ENCODE measurements at regions of chr6 and their contacts with region 1.

Region 1: GRCh38 chr6:30453508-30454116 is 35.7 kb upstream of the HLA-E start:
- DNase-seq: peak; percentile 82
- ATAC-seq: peak; percentile 93
- H3K4me3 Mint-ChIP-seq: peak overlapping the region; percentile 29
- H3K27ac Mint-ChIP-seq: no peak overlapping the region
- H3K4me1 Mint-ChIP-seq: peaks cover 26% of the 10 kb centered on the region
- H3K27me3 Mint-ChIP-seq: peaks cover 67% of the 10 kb centered on the region
- CTCF ChIP-seq: no peak

Region 2: DNA sequence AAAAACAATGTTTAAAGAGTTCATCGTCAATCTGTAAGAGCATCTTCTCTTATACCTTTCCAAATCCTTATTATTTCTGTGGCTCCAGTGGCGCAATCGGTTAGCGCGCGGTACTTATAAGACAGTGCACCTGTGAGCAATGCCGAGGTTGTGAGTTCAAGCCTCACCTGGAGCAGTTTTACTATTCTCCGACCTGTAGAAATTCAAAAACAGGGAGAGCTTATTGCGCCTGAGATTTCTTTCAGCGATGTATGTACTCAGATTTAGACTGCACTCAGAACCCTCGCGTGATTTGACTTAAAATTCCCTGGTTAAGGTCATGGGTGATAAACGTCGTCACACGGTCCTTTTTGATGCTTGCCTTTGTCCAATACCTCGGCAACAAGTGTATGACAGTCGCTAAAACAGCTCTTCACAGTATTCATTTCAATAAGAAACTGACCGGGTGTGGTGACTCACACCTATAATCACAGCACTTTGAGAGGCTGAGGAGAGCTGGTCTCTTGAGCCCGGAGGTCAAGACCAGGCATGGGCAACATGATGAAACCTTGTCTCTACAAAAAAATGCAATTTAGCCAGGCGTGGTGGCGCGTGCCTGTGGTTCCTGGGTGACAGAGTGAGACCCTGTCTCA is 1916.0 kb before region 1 on chr6:
- CTCF ChIA-PET with region 1: no interaction called
- POLR2A ChIA-PET with region 1: no interaction called
- intact Hi-C with region 1: no loop called
- DNase-seq: no peak
- ATAC-seq: no peak
- H3K4me3 Mint-ChIP-seq: no peak overlapping the region
- H3K27ac Mint-ChIP-seq: no peak overlapping the region
- H3K4me1 Mint-ChIP-seq: peaks cover 12% of the 10 kb centered on the region
- H3K27me3 Mint-ChIP-seq: peaks cover 71% of the 10 kb centered on the region
- CTCF ChIP-seq: no peak

Region 3: DNA sequence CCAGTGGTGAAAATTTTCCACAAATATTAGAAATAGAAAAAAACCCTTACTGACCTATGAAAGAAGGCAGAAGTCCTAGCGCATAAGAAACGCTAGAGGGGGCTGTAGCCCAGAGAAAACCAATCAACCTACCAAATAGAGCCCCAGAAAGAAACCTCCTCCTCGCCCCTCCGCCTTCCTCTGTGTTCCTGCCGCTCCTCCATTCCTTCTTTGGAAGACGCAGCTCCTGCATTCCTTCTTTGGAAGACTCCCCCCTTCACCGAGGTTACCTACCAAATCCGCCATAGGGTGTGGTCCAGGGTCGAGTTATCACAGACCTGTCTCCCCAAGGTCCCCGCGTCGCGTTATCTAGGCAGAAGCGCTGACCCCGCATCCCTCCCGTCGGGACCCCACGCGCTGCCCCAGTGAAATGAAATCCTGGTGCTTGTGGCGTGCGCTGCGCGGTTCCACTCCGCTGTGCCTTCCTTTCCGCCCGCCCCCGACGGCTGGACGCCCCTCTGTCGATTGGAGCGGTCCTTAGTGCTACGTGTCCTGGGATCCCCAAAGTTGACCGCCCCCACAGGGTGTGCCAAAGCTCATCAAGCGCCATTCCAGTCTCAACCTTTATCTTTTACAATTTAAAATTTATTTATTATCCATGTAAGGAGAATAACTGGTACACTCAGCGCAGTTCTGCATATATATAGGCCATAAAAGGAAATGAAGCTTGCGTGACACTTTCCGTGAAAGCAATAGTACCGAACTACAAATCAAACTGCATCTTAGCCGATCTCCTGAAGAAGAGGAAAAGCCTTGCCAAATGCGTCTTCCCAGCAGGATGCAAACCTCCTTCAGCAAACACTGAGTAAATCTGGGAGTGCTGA is 95.7 kb before region 1 on chr6:
- CTCF ChIA-PET with region 1: no interaction called
- POLR2A ChIA-PET with region 1: no interaction called
- intact Hi-C with region 1: loop called (anchors 10 kb)
- DNase-seq: peak; percentile 33
- ATAC-seq: peak; percentile 84
- H3K4me3 Mint-ChIP-seq: peak overlapping the region; percentile 84
- H3K27ac Mint-ChIP-seq: no peak overlapping the region
- H3K4me1 Mint-ChIP-seq: peaks cover 7% of the 10 kb centered on the region
- H3K27me3 Mint-ChIP-seq: peaks cover 44% of the 10 kb centered on the region
- CTCF ChIP-seq: peak; percentile 50

Region 4: DNA sequence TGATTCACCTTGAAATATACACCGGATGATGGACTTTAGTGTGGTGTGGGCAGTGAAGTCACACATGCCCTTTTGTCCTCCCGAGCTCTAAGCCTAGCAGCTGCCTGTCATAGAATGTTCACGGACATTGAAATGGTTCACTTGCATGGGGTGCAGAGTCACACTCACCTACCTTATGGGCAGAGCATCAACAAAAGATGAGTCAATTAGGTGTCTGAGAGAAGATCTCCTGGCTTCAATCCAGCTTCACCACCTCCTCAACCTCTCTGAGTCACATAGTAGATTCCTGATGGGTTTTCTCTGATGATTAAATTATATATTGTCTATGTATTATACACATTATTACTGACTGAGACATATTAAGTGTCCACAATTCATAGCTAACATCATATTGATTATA is 12.4 kb before region 1 on chr6:
- CTCF ChIA-PET with region 1: interaction called, 3 read pairs
- POLR2A ChIA-PET with region 1: no interaction called
- intact Hi-C with region 1: loop called (anchors 2 kb)
- DNase-seq: no peak
- ATAC-seq: no peak
- H3K4me3 Mint-ChIP-seq: no peak overlapping the region
- H3K27ac Mint-ChIP-seq: no peak overlapping the region
- H3K4me1 Mint-ChIP-seq: peaks cover 2% of the 10 kb centered on the region
- H3K27me3 Mint-ChIP-seq: peaks cover 56% of the 10 kb centered on the region
- CTCF ChIP-seq: no peak

Region 5: GRCh38 chr6:30500421-30501355 is 47.1 kb after region 1 on chr6:
- CTCF ChIA-PET with region 1: no interaction called
- POLR2A ChIA-PET with region 1: no interaction called
- intact Hi-C with region 1: no loop called
- DNase-seq: no peak
- ATAC-seq: peak; percentile 61
- H3K4me3 Mint-ChIP-seq: peak overlapping the region; percentile 74
- H3K27ac Mint-ChIP-seq: peak overlapping the region; percentile 79
- H3K4me1 Mint-ChIP-seq: peaks cover 49% of the 10 kb centered on the region
- H3K27me3 Mint-ChIP-seq: no peaks in the 10 kb centered on the region
- CTCF ChIP-seq: no peak

Region 6: DNA sequence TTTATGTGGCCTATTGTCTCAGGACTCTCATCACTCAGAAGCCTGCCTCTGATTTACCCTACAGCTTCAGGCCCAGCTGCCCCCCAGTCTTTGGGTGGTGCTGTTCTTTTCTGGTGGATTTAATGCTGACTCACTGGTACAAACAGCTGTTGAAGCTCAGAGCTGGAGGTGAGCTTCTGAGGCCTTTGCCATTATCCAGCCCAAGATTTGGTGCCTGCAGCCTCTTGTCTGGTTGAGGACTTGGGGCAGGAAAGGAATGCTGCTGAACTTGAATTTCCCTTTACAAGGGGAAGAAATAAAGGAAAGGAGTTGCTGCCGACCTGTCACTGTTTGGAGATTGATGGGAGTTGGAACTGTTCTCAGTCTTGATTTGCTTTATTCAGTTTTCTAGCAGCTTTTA is 137.4 kb after region 1 on chr6:
- CTCF ChIA-PET with region 1: interaction called, 10 read pairs
- POLR2A ChIA-PET with region 1: interaction called, 7 read pairs
- intact Hi-C with region 1: no loop called
- DNase-seq: no peak
- ATAC-seq: no peak
- H3K4me3 Mint-ChIP-seq: no peak overlapping the region
- H3K27ac Mint-ChIP-seq: no peak overlapping the region
- H3K4me1 Mint-ChIP-seq: no peaks in the 10 kb centered on the region
- H3K27me3 Mint-ChIP-seq: no peaks in the 10 kb centered on the region
- CTCF ChIP-seq: no peak

Region 7: DNA sequence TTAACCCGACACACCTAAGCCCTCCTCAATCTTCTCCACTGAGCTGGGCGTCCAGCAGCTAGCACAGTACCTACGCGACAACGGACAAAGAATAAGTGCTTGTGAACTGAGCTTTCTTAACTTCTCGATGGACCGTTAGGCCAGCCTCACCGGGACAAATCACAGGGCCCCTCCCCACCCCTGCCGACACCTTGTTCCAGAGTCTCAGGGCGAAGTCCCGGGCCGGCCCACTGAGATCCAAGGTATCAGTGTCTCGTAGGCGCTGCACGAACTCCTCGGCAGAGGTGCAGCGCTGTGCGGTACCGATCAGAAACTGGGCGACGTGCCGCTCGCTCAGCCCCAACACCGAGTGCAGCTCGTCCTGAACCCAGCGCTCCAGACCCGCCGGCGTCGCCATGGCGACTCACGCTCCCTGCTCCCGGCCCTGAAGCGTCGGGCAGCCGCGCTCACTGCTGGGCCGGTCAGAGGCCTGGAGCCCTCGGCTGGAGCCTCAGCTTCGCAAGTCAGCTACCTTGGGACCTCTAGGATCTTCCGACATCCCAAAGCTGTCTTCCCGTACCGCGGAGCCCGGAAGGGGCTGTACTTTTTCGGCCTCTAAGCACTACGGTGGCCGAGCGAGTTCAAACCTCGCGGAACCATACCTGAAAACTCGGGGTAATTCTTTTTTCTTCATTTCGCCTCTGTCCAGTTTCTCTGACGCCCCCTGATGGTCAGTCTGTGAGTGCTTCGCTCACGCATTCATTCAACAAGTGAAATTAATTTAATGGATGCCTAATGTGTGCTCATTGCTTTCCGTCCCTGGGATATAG is 219.0 kb after region 1 on chr6 and contains the start of gene DHX16:
- CTCF ChIA-PET with region 1: no interaction called
- POLR2A ChIA-PET with region 1: no interaction called
- intact Hi-C with region 1: loop called (anchors 10 kb)
- DNase-seq: peak; percentile 80
- ATAC-seq: peak; percentile 88
- H3K4me3 Mint-ChIP-seq: peak within 1 kb of the TSS; percentile 91
- H3K27ac Mint-ChIP-seq: peak within 1 kb of the TSS; percentile 84
- H3K4me1 Mint-ChIP-seq: peaks cover 42% of the 10 kb centered on the region
- H3K27me3 Mint-ChIP-seq: no peaks in the 10 kb centered on the region
- CTCF ChIP-seq: peak; percentile 51
- total RNA-seq, gene DHX16: 42.3 and 50.4 TPM in 2 replicates

Region 8: GRCh38 chr6:30800871-30801270 is 347.3 kb after region 1 on chr6:
- CTCF ChIA-PET with region 1: no interaction called
- POLR2A ChIA-PET with region 1: no interaction called
- intact Hi-C with region 1: no loop called
- DNase-seq: no peak
- ATAC-seq: no peak
- H3K4me3 Mint-ChIP-seq: no peak overlapping the region
- H3K27ac Mint-ChIP-seq: no peak overlapping the region
- H3K4me1 Mint-ChIP-seq: no peaks in the 10 kb centered on the region
- H3K27me3 Mint-ChIP-seq: peaks cover 13% of the 10 kb centered on the region
- CTCF ChIP-seq: no peak